Activated naive CD4-positive, alpha-beta T cell treated with anti-CD3 and anti-CD28 coated beads for 36 hours (primary cell): ENCODE measurements at regions of chr2 and their contacts with region 1.

Region 1: DNA sequence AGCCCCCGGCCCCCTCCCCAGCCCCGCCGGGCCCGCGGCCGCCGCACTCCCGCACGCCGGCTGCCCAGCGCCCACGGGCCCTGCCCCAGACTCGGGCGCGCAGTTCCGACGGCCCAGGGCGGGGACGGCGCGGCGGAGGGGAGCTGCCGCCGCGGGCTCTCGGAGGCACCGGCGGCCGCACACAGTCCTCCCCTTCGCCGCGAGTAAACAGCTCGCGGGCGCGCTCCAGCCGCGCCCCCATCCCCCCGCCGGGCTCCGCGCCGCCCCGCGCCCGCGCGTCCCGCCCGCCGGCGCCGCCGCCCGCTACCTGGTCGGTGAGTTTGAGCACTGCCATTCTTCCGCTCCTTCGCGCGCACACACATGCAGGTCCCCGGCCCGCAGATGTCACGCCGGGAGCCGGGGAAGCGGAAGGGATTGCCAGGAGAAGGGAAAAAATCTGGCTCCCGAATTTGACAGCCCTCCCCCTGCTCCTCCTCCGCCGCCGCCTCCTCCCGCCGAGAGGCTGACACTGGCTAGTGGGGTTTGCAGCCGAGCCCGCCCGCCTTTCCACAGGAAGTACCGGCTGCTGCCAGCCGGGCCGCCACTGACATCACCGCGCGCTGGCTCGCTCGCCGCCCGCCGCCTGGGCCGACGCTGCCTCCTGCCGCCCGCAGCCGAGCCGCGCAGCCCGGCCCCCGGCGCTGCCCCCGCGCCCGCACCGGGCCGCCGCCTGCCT is at the start of gene ANKRD44:
- DNase-seq: peak; percentile 91
- H3K4me3 Mint-ChIP-seq: peak within 1 kb of the TSS; percentile 90
- H3K27ac Mint-ChIP-seq: peak within 1 kb of the TSS; percentile 96
- H3K4me1 Mint-ChIP-seq: peaks cover 58% of the 10 kb centered on the region
- H3K27me3 Mint-ChIP-seq: no peaks in the 10 kb centered on the region
- total RNA-seq, gene ANKRD44: 87.8 to 101 TPM

Region 2: GRCh38 chr2:196987649-196988364 is 322.6 kb before region 1 on chr2:
- CTCF ChIA-PET with region 1: no interaction called
- intact Hi-C with region 1: loop called (anchors 2 kb)
- DNase-seq: peak; percentile 76
- H3K4me3 Mint-ChIP-seq: peak overlapping the region; percentile 17
- H3K27ac Mint-ChIP-seq: peak overlapping the region; percentile 98
- H3K4me1 Mint-ChIP-seq: peaks cover 78% of the 10 kb centered on the region
- H3K27me3 Mint-ChIP-seq: no peaks in the 10 kb centered on the region

Region 3: GRCh38 chr2:197113275-197113711 is 197.1 kb before region 1 on chr2:
- CTCF ChIA-PET with region 1: interaction called, 20 read pairs
- intact Hi-C with region 1: loop called (anchors 1 kb)
- DNase-seq: no peak
- H3K4me3 Mint-ChIP-seq: no peak overlapping the region
- H3K27ac Mint-ChIP-seq: peak overlapping the region; percentile 28
- H3K4me1 Mint-ChIP-seq: peaks cover 22% of the 10 kb centered on the region
- H3K27me3 Mint-ChIP-seq: no peaks in the 10 kb centered on the region

Region 4: GRCh38 chr2:197209742-197210408 is 100.6 kb before region 1 on chr2:
- CTCF ChIA-PET with region 1: interaction called, 8 read pairs
- intact Hi-C with region 1: loop called (anchors 1 kb)
- DNase-seq: peak; percentile 78
- H3K4me3 Mint-ChIP-seq: peak overlapping the region; percentile 46
- H3K27ac Mint-ChIP-seq: peak overlapping the region; percentile 97
- H3K4me1 Mint-ChIP-seq: peaks cover 99% of the 10 kb centered on the region
- H3K27me3 Mint-ChIP-seq: no peaks in the 10 kb centered on the region

Region 5: DNA sequence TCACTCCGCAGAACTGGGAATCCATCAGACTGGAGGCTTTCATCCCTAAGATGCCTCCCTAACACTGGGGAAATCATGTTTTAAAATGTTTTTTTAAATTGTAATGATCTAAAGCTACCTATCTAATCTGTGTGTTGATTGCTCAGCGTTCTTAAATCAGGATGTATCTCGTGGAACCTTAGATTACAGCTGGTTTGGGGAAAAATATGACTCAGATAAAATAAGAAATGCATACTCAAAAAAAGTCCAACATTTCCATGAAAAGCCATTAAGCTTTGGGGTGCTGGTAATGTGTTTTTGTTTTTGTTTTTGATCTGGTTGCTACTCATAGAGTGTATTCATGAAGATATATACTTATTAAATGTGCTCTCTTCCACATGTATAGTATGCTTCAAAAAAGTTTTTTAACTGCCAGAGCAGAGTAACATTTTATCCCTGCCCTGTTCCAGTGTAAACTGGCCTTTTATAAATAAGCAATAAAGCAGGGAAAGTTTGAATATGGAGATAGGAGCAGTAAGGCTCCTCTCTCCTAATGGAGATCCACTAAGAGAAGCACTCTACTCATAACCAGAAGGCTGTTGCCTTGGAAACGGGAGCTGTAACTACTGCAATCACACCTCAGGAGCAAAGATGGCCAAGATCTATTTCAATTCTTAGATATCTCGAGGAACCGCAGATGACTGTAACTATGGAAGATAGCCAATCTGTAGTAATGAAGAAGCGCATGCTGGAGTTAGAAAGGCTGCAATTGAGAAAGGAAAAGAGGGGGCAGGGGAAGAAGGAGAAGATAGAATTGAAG is 41.4 kb before region 1 on chr2:
- CTCF ChIA-PET with region 1: interaction called, 5 read pairs
- intact Hi-C with region 1: loop called (anchors 2 kb)
- DNase-seq: peak; percentile 71
- H3K4me3 Mint-ChIP-seq: no peak overlapping the region
- H3K27ac Mint-ChIP-seq: peak overlapping the region; percentile 73
- H3K4me1 Mint-ChIP-seq: peaks cover 93% of the 10 kb centered on the region
- H3K27me3 Mint-ChIP-seq: no peaks in the 10 kb centered on the region

Region 6: GRCh38 chr2:197322724-197323720 is 12.6 kb after region 1 on chr2:
- CTCF ChIA-PET with region 1: interaction called, 17 read pairs
- intact Hi-C with region 1: no loop called
- DNase-seq: peak; percentile 41
- H3K4me3 Mint-ChIP-seq: peak overlapping the region; percentile 62
- H3K27ac Mint-ChIP-seq: peak overlapping the region; percentile 88
- H3K4me1 Mint-ChIP-seq: peaks cover 73% of the 10 kb centered on the region
- H3K27me3 Mint-ChIP-seq: no peaks in the 10 kb centered on the region

Region 7: GRCh38 chr2:197369228-197369932 is 59.0 kb after region 1 on chr2:
- CTCF ChIA-PET with region 1: no interaction called
- intact Hi-C with region 1: no loop called
- DNase-seq: peak; percentile 18
- H3K4me3 Mint-ChIP-seq: no peak overlapping the region
- H3K27ac Mint-ChIP-seq: no peak overlapping the region
- H3K4me1 Mint-ChIP-seq: peaks cover 13% of the 10 kb centered on the region
- H3K27me3 Mint-ChIP-seq: no peaks in the 10 kb centered on the region

Region 8: DNA sequence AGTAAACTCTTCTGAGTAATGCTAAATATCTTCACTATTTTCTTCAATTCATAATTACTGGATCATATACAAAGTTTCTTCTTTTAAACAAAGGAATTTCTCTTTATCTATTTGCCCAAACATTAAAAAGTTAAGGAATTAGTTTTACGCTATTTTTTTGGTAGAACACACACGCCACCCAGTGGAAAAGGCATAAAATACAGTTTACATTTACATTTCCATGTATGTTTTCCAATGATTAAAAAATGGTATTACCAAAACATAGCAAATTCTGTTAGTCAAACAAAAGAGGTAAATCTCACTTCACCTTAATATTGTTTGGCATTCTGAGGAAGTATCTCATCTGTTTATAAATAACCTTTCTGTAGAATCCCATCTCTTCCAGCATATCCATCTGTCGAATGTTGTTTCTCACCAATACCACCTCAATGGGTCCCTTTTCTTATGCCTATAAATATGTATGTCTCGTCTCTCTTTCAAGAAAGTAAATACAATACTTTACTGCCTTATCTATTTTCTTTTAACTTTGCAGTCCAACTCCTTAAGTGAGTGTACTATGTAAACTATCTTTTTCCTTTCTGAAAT is 467.5 kb after region 1 on chr2:
- CTCF ChIA-PET with region 1: no interaction called
- intact Hi-C with region 1: loop called (anchors 2 kb)
- DNase-seq: peak; percentile 52
- H3K4me3 Mint-ChIP-seq: no peak overlapping the region
- H3K27ac Mint-ChIP-seq: no peak overlapping the region
- H3K4me1 Mint-ChIP-seq: no peaks in the 10 kb centered on the region
- H3K27me3 Mint-ChIP-seq: peaks cover 5% of the 10 kb centered on the region